Gastrocnemius medialis (tissue), 4 donors: ENCODE measurements at regions of chr5 and their contacts with region 1.

Region 1: DNA sequence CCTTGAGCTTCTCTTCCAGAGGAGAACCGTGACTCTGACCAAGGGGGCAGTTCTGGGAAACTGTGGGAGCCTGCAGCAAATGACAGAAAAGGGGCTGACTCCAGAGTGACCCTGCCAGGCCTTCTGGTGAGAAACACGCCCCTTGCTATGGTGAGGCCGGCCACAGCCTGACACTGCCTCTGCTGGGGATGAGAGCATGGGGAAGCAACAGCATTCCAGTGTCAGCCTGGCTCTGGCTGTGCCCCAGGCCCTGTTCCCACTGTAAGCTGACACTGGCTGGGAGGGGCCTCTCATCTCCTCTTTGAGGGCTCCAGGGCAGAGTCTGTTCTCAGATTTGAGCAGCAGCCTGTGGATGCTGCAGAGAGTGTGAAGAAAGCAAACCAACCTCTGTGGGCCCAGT is 180.0 kb upstream of the IL12B start:
- DNase-seq: peak; percentile 67 to 81
- ATAC-seq: peak; percentile 82 to 83
- H3K4me3 ChIP-seq: no peak overlapping the region
- H3K27ac ChIP-seq: peak overlapping the region in 3 of 4 donors; percentile 12 to 59 (median 44)
- H3K4me1 ChIP-seq: peaks cover 0 to 33% of the 10 kb centered on the region in 2 donors
- H3K27me3 ChIP-seq: no peaks in the 10 kb centered on the region
- CTCF ChIP-seq: peak in 1 of 5 experiments; percentile 16
- POLR2A ChIP-seq: no peak

Region 2: GRCh38 chr5:159149085-159149484 is 361.2 kb before region 1 on chr5:
- in situ Hi-C with region 1: no loop called
- intact Hi-C with region 1: no loop called
- DNase-seq: no peak
- ATAC-seq: no peak
- H3K4me3 ChIP-seq: no peak overlapping the region
- H3K27ac ChIP-seq: no peak overlapping the region
- H3K4me1 ChIP-seq: no peaks in the 10 kb centered on the region
- H3K27me3 ChIP-seq: no peaks in the 10 kb centered on the region
- CTCF ChIP-seq: no peak
- POLR2A ChIP-seq: no peak

Region 3: GRCh38 chr5:159451197-159452052 is 58.9 kb before region 1 on chr5:
- in situ Hi-C with region 1: no loop called
- intact Hi-C with region 1: loop called (anchors 1 kb)
- DNase-seq: peak; percentile 44 to 45
- ATAC-seq: peak; percentile 95 to 98
- H3K4me3 ChIP-seq: no peak overlapping the region
- H3K27ac ChIP-seq: peak overlapping the region; percentile 24 to 55 (median 48)
- H3K4me1 ChIP-seq: peaks cover 0 to 5% of the 10 kb centered on the region in 2 donors
- H3K27me3 ChIP-seq: no peaks in the 10 kb centered on the region
- CTCF ChIP-seq: no peak
- POLR2A ChIP-seq: no peak

Region 4: DNA sequence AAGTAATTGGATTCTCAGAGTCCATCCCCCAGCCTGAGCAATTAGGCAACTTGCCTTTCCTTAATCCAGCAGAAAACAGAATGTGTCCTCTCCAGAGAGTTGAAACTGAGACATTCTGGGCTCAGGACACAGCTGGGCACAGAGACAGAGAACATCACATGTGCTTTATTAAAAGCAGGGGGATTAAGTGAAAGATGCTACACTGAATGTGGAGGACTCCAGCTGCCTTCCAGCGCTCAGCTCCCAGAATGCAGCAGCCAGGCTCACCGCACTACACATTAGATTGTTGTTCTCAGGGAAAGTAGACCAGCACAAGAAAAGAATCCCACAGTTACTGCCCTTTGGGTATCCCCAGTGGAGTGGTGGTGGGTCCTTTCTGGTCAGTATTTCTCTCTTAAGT is 38.4 kb before region 1 on chr5:
- in situ Hi-C with region 1: no loop called
- intact Hi-C with region 1: loop called (anchors 1 kb)
- DNase-seq: peak; percentile 58 to 68
- ATAC-seq: peak; percentile 97 to 99
- H3K4me3 ChIP-seq: peak overlapping the region in 1 of 4 donors; percentile 22
- H3K27ac ChIP-seq: peak overlapping the region in 2 of 4 donors; percentile 54 to 76
- H3K4me1 ChIP-seq: no peaks in the 10 kb centered on the region
- H3K27me3 ChIP-seq: no peaks in the 10 kb centered on the region
- CTCF ChIP-seq: no peak
- POLR2A ChIP-seq: no peak

Region 5: DNA sequence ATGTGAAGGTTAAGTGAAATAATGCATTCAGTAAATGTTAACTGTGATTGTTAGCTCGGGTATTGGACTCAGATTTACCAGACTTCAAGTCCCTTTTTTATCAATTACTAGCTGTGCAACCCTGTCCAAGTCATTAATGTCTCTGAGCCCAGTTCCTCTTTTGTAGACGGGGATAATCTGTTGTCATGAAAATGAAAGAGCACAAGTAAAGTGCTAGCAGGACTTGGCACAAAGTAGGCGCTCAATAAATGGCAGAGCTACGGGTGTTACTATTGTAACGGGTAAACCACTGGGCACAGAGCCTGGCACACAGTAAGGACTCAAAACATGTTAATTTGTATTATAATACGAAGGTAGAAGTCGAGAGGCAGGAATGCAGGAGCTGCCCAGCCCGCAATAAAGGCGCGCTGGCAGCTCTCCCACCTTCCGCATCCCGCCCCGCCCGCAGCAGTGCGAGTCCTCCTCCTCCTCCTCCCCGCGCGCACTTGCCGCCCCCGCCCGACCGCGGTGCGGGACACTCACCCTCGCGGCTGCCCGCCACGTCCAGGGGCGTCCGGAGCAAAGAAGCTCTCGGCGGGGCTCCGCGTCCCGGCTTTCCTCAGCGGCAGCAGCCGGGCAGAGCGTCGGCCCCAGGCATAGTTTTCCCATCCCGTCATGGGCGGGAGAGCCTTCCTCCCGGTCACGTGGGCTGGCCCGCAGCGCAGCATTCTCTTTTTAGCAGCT is 859.9 kb after region 1 on chr5 and contains the start of gene C1QTNF2:
- in situ Hi-C with region 1: no loop called
- intact Hi-C with region 1: no loop called
- DNase-seq: no peak
- ATAC-seq: peak in 1 of 2 donors; percentile 62
- H3K4me3 ChIP-seq: peak within 1 kb of the TSS; percentile 62 to 67 (median 62)
- H3K27ac ChIP-seq: peak within 1 kb of the TSS; percentile 27 to 52 (median 28)
- H3K4me1 ChIP-seq: peaks cover 0 to 9% of the 10 kb centered on the region in 2 donors
- H3K27me3 ChIP-seq: no peaks in the 10 kb centered on the region
- CTCF ChIP-seq: no peak
- POLR2A ChIP-seq: no peak
- total RNA-seq, gene C1QTNF2: 0.09 to 0.65 TPM in 2 of 4 donors, not detected in the others